ENCODE measurements at regions of chr15 and their contacts with region 1.

Region 1: GRCh38 chr15:50675536-50676144 is 11.0 kb downstream of the TRPM7 start:
- DNase-seq: peak; percentile 55
- H3K4me3 ChIP-seq: no peak overlapping the region
- H3K27ac ChIP-seq: no peak overlapping the region
- H3K4me1 ChIP-seq: peaks cover 5% of the 10 kb centered on the region
- H3K27me3 ChIP-seq: no peaks in the 10 kb centered on the region
- CTCF ChIP-seq: peak; percentile 82

Region 2: DNA sequence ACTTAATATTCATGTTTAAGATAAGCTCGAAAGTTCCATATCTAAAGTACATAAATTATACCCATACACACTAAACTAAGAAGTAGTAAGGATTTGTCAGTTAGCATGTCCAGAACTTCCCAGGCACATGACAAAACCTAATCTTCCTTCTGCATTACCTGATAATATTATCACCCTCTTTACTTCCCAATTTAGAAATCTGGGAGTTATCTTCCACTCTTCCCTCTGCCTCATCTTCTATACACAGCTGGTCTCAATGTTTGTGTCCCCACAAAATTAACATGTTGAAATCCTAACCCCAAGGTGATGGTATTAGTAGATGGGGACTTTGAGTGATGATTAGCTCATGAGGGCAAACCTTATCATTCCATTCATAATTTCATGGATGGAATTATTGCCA is 335.9 kb before region 1 on chr15:
- CTCF ChIA-PET with region 1: no interaction called
- POLR2A ChIA-PET with region 1: interaction called, 16 read pairs
- intact Hi-C with region 1: no loop called
- DNase-seq: no peak
- H3K4me3 ChIP-seq: no peak overlapping the region
- H3K27ac ChIP-seq: no peak overlapping the region
- H3K4me1 ChIP-seq: no peaks in the 10 kb centered on the region
- H3K27me3 ChIP-seq: no peaks in the 10 kb centered on the region
- CTCF ChIP-seq: no peak

Region 3: GRCh38 chr15:50855092-50855396 is 179.4 kb after region 1 on chr15:
- CTCF ChIA-PET with region 1: interaction called, 14 read pairs
- POLR2A ChIA-PET with region 1: no interaction called
- intact Hi-C with region 1: no loop called
- DNase-seq: no peak
- H3K4me3 ChIP-seq: no peak overlapping the region
- H3K27ac ChIP-seq: no peak overlapping the region
- H3K4me1 ChIP-seq: no peaks in the 10 kb centered on the region
- H3K27me3 ChIP-seq: no peaks in the 10 kb centered on the region
- CTCF ChIP-seq: no peak

Region 4: GRCh38 chr15:50876989-50877360 is 201.3 kb after region 1 on chr15:
- CTCF ChIA-PET with region 1: no interaction called
- POLR2A ChIA-PET with region 1: no interaction called
- intact Hi-C with region 1: loop called (anchors 2 kb)
- DNase-seq: peak; percentile 90
- H3K4me3 ChIP-seq: peak overlapping the region; percentile 32
- H3K27ac ChIP-seq: peak overlapping the region; percentile 43
- H3K4me1 ChIP-seq: peaks cover 27% of the 10 kb centered on the region
- H3K27me3 ChIP-seq: no peaks in the 10 kb centered on the region
- CTCF ChIP-seq: peak; percentile 95

Region 5: DNA sequence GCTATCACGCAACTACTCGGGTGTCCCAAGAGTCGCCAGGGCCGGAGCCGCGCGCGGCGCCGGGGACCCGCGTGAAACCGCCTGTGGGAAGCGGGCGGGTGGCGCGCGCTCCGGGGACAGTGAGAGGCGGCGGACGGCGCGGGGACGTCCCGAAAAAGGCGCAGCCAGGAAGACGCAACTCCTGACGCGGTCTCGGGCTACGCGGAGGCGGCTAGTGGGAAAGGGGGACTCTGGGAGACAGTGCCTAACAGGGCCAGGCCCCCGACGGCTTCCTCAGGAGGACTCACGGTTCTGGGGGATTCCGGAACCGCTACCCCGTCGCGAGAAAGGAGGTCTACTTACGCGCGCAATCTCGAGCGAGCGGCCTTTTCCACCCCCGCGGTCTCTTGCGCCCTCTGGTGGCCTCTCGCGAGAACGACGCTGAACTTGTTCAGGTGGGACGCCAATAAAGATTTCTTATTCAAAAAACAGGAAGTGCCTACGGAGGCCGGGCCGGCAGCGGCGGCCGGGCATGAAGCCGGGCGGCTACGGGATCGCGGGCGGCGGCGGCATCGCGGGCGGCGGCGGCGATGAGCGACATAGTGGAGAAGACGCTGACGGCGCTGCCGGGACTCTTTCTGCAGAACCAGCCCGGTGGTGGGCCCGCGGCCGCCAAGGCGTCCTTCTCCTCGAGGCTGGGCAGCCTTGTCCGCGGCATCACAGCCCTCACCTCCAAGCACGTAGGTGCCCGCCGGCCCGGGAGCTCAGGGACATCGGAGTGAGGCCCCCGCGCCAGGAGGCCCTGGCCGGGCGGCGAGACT is 232.8 kb after region 1 on chr15 and contains the start of gene AP4E1:
- CTCF ChIA-PET with region 1: no interaction called
- POLR2A ChIA-PET with region 1: no interaction called
- intact Hi-C with region 1: loop called (anchors 1 kb)
- DNase-seq: peak; percentile 96
- H3K4me3 ChIP-seq: peak within 1 kb of the TSS; percentile 92
- H3K27ac ChIP-seq: peak within 1 kb of the TSS; percentile 96
- H3K4me1 ChIP-seq: peaks cover 11% of the 10 kb centered on the region
- H3K27me3 ChIP-seq: no peaks in the 10 kb centered on the region
- CTCF ChIP-seq: peak; percentile 87
- total RNA-seq, gene AP4E1: 13.7 and 13.9 TPM in 2 replicates